ENCODE measurements at regions of chr1 and their contacts with region 1.

Region 1: DNA sequence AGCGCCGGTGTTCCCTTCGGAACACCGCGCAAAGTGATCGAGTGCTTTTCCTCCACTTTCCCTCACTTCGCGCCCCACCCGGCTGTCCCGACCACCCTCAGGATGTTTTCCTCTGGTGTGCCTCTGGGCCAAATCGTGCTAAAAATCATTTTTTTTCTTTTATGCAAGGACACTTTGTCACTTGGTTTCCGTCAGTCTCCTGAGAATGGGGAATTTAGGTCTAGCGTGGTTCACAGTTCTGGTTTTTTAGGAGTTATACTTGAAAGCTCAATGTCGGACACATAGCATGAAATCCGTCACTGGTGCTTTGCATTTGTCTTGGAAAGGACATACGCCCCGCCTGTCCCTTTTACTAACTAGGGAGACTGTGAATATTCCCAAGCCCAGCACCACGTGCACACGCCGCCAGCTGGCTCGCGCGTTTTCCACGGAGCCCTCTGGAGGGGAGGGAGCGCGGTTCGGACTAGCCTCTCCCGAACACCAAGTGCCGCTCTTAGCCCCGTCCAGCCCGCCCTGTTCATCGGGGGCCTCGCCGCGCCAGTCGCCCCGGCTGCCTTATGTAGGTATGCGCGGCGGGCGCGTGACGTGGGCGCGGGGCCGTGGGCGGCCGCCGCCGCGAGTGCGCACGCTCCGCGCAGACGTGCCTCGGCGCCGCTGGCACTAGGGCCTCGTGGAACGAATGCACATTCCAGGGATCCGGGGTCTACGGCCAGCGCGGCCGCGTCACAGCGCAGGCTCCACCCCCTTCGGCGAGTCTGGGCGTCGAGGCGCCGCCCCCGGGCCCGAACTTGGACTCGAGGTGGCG is 572 bp upstream of the IRF2BP2 start:
- DNase-seq: peak; percentile 98
- H3K4me3 ChIP-seq: peak overlapping the region; percentile 48 to 90 (median 58)
- H3K27ac ChIP-seq: peak overlapping the region; percentile 97 to 100 (median 100)
- H3K4me1 ChIP-seq: peaks cover 0 to 41% (median 33%) of the 10 kb centered on the region in 4 donors
- H3K27me3 ChIP-seq: no peaks in the 10 kb centered on the region
- CTCF ChIP-seq: peak in 1 of 4 experiments; percentile 6
- EP300 ChIP-seq: peak in 2 of 4 donors; percentile 34 to 90
- POLR2A ChIP-seq: peak; percentile 85 to 89

Region 2: GRCh38 chr1:234499119-234499942 is 111.2 kb before region 1 on chr1:
- intact Hi-C with region 1: loop called (anchors 1 kb)
- DNase-seq: peak; percentile 96
- H3K4me3 ChIP-seq: peak overlapping the region in 3 of 4 donors; percentile 20 to 34 (median 21)
- H3K27ac ChIP-seq: peak overlapping the region; percentile 80 to 89 (median 82)
- H3K4me1 ChIP-seq: peaks cover 0 to 38% (median 29%) of the 10 kb centered on the region in 4 donors
- H3K27me3 ChIP-seq: no peaks in the 10 kb centered on the region
- CTCF ChIP-seq: peak; percentile 94 to 97 (median 95)
- EP300 ChIP-seq: peak in 2 of 4 donors; percentile 56 to 57
- POLR2A ChIP-seq: peak in 1 of 2 donors; percentile 17

Region 3: GRCh38 chr1:234647245-234647644 is 36.7 kb after region 1 on chr1:
- intact Hi-C with region 1: no loop called
- DNase-seq: no peak
- H3K4me3 ChIP-seq: no peak overlapping the region
- H3K27ac ChIP-seq: no peak overlapping the region
- H3K4me1 ChIP-seq: no peaks in the 10 kb centered on the region
- H3K27me3 ChIP-seq: no peaks in the 10 kb centered on the region
- CTCF ChIP-seq: no peak
- EP300 ChIP-seq: no peak
- POLR2A ChIP-seq: no peak

Region 4: DNA sequence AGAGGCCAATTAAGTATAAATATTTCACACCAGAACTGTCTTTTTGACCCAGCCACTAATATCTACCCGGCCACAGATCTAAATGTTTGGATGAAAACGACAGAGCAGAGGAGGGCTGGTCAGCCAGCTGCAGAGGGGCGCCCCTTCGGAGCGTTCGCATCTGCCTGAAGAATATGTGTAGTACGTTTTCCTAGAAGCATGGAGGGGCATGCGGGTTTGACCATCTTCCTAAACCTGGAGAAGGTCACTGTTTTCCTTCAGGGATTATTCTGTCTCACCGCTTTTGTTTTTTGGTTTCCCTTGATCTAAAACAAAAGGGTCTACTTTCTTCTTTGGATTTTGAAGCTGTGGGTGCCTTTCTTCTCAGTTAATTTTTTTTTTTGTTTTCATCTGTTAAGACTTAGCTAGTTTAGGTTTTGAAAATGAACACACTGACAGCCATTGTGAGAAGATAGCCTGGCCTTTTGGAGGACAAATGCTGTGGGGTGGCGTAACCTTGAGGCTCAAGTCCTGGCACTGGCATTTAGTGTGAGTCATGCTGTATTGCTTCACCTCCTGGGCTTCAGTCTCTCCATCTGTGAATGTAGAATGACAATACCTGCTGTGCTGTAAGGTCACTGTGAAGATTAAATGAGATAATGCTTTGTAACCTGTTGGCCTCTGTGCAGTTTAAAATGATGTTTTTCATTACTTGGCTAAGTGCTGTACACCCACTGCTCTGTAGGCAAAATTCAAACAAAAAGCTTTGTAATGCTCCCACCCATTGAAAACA is 73.5 kb after region 1 on chr1:
- intact Hi-C with region 1: loop called (anchors 5 kb)
- DNase-seq: peak; percentile 91
- H3K4me3 ChIP-seq: no peak overlapping the region
- H3K27ac ChIP-seq: peak overlapping the region; percentile 65 to 79 (median 78)
- H3K4me1 ChIP-seq: peaks cover 0 to 17% (median 11%) of the 10 kb centered on the region in 4 donors
- H3K27me3 ChIP-seq: no peaks in the 10 kb centered on the region
- CTCF ChIP-seq: no peak
- EP300 ChIP-seq: peak in 1 of 4 donors; percentile 28
- POLR2A ChIP-seq: no peak

Region 5: DNA sequence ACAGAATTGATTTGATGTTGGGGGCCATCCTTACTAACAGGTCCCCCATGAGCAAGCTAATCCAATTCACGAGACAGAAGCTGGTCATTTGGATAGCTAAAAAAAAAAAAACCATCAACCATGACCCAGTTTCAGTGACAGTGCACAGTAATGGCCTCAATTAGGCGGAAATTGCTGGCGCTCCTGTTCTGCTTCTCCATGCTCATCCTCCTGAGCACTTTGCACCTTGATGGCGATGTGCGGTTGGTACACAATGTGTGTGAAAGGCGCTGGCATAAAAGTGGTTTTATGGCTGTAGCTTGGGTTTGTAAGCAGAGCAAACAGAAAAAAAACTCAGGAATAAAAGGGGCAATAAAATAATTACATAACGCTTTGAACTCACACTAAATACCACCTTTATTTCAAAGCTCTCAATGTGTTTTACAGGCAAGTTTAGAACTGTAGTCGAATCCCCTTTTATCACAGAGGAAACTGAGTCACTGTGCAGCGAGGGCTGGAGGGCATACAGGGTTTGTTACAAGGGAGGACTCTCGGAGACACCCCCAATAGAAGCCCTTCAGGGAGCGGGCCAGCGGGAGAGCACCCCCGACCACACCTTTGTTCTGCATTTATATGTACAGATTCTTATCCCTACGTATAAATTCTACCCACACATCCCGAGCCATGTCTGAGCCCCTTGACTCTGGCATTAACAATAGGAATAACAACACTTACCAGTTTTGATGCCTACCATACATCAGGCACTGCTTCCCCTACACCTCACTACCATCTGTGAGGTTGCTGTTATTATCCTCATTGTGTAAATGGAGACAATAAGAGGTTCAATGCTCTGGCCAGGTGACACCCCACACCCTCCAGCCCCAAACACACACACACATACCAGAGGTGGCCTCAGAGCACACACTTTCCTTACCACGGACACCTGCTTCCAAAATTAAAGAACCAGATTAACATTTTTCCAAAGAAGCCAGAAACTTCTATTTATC is 212.9 kb after region 1 on chr1:
- intact Hi-C with region 1: loop called (anchors 10 kb)
- DNase-seq: no peak
- H3K4me3 ChIP-seq: no peak overlapping the region
- H3K27ac ChIP-seq: no peak overlapping the region
- H3K4me1 ChIP-seq: peaks cover 0 to 9% (median 0%) of the 10 kb centered on the region in 4 donors
- H3K27me3 ChIP-seq: no peaks in the 10 kb centered on the region
- CTCF ChIP-seq: no peak
- EP300 ChIP-seq: no peak
- POLR2A ChIP-seq: no peak

Region 6: DNA sequence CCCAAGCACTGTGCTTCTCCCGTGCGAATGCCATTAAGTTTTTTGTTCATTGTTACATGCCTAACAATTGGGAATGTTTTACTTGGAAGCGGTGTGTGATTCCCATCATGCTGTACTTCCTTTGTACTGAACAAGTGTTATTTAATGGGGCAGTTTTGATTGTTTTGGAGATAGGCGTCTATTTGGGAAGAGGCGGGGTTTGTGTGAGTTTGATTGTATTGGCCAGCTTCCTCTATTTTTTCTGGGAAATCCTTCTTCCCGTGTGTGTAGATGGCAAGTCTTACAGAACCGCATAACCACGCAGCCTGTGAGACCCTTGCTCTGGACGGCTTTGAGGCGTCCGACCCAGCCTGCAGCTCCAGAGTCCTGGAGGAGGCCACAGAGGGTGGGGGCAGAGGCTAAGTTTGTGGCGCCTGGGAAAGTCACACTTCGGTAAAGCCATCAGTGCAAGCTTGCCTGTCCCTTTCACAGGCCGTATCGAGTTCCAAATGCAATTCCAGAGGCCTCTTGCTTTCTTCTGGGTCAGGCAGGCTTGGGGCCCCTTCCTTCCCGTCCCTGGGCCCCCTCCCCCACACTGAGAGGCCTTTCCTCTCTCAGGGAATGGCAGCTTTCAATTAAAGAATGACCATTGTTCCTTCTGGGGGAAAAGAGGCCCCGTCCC is 307.8 kb after region 1 on chr1:
- intact Hi-C with region 1: loop called (anchors 5 kb)
- DNase-seq: peak; percentile 63
- H3K4me3 ChIP-seq: no peak overlapping the region
- H3K27ac ChIP-seq: peak overlapping the region; percentile 73 to 84 (median 76)
- H3K4me1 ChIP-seq: peaks cover 0 to 52% (median 36%) of the 10 kb centered on the region in 4 donors
- H3K27me3 ChIP-seq: no peaks in the 10 kb centered on the region
- CTCF ChIP-seq: no peak
- EP300 ChIP-seq: peak in 2 of 4 donors; percentile 6 to 73
- POLR2A ChIP-seq: no peak

Region 7: GRCh38 chr1:234997201-234997895 is 386.8 kb after region 1 on chr1:
- intact Hi-C with region 1: loop called (anchors 2 kb)
- DNase-seq: peak; percentile 100
- H3K4me3 ChIP-seq: peak overlapping the region in 1 of 4 donors; percentile 3
- H3K27ac ChIP-seq: peak overlapping the region; percentile 89 to 95 (median 90)
- H3K4me1 ChIP-seq: peaks cover 0 to 45% (median 42%) of the 10 kb centered on the region in 4 donors
- H3K27me3 ChIP-seq: no peaks in the 10 kb centered on the region
- CTCF ChIP-seq: no peak
- EP300 ChIP-seq: peak; percentile 98 to 100 (median 99)
- POLR2A ChIP-seq: peak; percentile 29 to 42